ENCODE measurements at regions of chr12 and their contacts with region 1.

Region 1: DNA sequence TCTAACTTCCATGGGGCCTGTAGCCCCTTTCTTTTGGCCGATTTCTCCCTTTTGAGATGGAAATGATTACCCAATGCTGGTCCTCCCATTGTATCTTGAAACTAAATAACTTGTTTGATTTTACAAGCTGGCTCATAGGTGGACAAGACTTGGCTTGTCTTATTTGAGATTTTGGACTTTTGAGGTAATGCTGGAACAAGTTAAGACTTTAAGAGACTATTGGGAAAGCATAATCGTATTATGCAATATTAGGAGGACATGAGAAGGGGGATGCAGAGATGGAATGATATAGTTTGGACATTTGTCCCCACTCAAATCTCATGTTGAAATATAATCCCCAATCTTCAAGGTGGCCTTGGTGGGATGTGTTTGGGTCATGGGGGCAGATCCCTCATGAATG is 49.2 kb upstream of the LYZ start:
- DNase-seq: peak; percentile 74
- H3K4me3 ChIP-seq: no peak overlapping the region
- H3K27ac ChIP-seq: no peak overlapping the region
- H3K4me1 ChIP-seq: no peaks in the 10 kb centered on the region
- H3K27me3 ChIP-seq: peaks cover 1% of the 10 kb centered on the region
- CTCF ChIP-seq: no peak

Region 2: DNA sequence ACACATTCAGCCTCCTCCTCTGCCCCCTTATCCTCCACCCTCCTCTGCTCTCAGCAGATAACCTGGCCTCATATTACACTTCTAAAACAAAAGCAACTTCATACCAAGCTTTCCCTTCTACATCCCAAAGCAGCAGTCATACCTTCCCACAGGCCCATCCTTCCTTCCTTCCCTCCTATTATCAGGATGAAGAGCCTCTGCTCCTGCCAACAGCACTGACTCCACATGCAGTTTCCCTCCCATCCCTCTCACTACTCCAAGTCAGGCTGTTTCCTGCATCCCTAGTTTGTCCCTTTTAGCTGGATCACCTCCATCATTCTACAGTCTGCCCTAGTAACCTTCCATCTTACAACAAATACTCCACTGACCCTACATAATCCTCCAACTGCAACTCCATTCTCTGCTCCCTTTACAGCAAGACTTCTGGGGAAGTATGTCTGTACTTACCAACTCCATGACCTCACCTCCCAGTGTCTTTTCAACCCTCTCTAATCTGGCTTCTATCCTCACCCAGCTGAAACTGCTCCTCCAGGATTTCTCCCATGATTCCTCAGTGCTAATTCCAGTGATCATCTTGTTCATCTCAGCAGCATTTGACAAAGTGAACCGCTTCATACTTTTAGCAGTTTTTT is 55.7 kb after region 1 on chr12:
- CTCF ChIA-PET with region 1: no interaction called
- dilution Hi-C with region 1: loop called (anchors 5 kb)
- in situ Hi-C with region 1: no loop called
- intact Hi-C with region 1: no loop called
- DNase-seq: no peak
- H3K4me3 ChIP-seq: no peak overlapping the region
- H3K27ac ChIP-seq: no peak overlapping the region
- H3K4me1 ChIP-seq: peaks cover 8% of the 10 kb centered on the region
- H3K27me3 ChIP-seq: no peaks in the 10 kb centered on the region
- CTCF ChIP-seq: no peak

Region 3: DNA sequence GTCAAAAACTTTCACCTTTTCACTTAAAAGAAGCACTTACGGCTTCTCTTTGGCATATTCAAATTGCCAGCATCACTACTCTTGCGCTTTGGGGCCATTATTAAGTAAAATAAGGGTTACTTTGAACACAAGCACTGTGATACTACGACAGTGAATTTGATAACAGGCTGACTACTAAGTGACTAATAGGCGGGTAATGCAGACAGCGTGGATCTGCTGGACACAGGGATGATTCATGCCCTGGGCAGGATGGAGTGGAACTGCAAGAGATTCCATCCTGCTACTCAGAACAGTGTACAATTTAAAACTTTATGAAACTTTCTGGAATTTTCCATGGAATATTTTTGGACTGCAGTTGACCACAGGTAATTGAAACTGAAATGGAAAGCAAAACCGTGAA is 106.5 kb after region 1 on chr12:
- CTCF ChIA-PET with region 1: no interaction called
- dilution Hi-C with region 1: loop called (anchors 5 kb)
- in situ Hi-C with region 1: no loop called
- intact Hi-C with region 1: no loop called
- DNase-seq: peak; percentile 86
- H3K4me3 ChIP-seq: no peak overlapping the region
- H3K27ac ChIP-seq: no peak overlapping the region
- H3K4me1 ChIP-seq: peaks cover 12% of the 10 kb centered on the region
- H3K27me3 ChIP-seq: no peaks in the 10 kb centered on the region
- CTCF ChIP-seq: no peak